K562 (cell line): ENCODE measurements at regions of chr6 and their contacts with region 1.

Region 1: DNA sequence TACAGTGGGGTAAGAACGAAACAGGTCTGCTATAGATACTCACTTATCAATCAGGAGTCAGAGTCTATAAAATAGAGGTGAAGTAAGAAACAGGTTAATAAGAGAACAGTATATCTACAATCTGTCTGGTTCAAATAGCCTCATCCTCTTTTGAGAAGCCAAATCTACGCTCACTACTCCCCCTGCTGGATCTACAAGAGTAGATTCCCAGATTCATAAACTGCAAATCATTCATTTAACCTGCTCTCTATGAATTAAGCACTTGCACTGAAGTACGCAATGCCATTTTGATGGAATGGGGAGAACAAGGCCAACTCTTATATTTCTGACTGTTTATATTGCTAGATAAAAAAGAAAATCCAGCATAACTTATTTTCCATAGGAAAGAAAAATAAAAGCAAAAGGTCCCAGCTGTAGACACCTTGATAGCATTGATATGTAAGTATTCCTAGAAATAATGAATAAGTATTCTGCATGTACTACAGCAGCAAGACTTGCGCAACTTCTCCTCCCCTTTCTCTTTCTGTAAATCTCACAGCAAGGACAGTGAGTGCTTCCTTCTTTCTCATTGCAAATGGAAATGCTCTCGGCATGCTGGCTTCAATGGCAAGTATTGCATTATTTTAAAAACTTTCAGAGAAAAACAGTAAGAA is 92.3 kb downstream of the RFX6 start:
- DNase-seq: peak; percentile 19 to 64 (median 42)
- ATAC-seq: peak; percentile 89
- H3K4me3 ChIP-seq: no peak overlapping the region
- H3K27ac ChIP-seq: no peak overlapping the region
- H3K4me1 ChIP-seq: no peaks in the 10 kb centered on the region
- H3K27me3 ChIP-seq: no peaks in the 10 kb centered on the region
- CTCF ChIP-seq: peak; percentile 58 to 69 (median 63)
- EP300 ChIP-seq: no peak
- POLR2A ChIP-seq: no peak
- RAD21 ChIP-seq: peak; percentile 28 to 75

Region 2: DNA sequence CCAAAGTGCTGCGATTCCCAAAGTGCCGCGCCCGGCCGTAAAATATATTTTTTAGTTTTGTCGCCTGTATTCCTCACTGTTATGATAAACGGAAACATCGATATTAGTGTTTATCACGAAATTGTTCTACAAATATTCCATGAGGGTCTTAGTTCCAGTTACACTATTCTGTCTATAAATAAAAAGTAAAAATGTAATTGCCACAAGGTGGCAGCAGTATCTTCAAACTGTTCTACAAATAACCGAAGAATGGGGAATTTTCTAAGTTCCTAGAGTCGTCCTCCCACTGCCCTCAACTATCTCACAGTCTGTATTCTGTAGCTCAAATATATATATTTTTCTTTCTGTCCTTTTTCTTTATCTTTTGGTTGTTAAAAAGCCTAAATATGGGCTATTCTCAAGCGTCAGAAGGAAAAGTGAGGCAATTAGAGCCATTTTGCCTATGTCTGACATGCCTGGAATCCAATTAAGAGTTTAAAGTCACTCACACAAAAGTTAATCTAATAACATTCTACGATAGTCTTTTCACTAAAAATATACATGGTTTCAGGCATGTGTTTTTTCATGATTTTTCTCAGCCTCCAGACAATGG is 189.7 kb before region 1 on chr6:
- CTCF ChIA-PET with region 1: interaction called, 7 read pairs
- POLR2A ChIA-PET with region 1: no interaction called
- in situ Hi-C with region 1: no loop called
- intact Hi-C with region 1: loop called (anchors 1 kb)
- DNase-seq: peak; percentile 10 to 70 (median 19)
- ATAC-seq: peak; percentile 93
- H3K4me3 ChIP-seq: no peak overlapping the region
- H3K27ac ChIP-seq: no peak overlapping the region
- H3K4me1 ChIP-seq: no peaks in the 10 kb centered on the region
- H3K27me3 ChIP-seq: no peaks in the 10 kb centered on the region
- CTCF ChIP-seq: peak; percentile 40 to 60 (median 46); a peak in 4 of 6 replicates
- EP300 ChIP-seq: no peak
- POLR2A ChIP-seq: no peak
- RAD21 ChIP-seq: peak; percentile 51 to 65; a peak in 3 of 4 replicates

Region 3: DNA sequence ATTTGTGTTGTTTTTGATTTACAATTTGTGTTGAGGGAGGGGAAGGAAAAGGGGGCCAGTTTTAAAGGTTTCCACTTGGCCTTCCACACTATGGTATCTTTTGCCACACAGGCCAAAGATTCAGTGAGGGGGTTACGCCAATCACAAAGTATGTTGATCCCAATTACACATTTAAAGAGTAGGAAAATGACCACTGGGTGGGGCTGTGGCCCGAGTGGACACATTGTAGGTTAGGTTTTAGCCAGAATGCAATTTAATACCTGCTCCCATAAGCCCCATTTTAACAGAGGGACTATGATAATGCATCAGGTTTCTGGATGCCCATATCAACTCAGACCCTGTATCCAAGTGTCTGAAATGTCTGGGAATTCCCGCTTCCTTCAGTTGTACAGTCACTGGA is 311.6 kb after region 1 on chr6:
- CTCF ChIA-PET with region 1: no interaction called
- POLR2A ChIA-PET with region 1: no interaction called
- in situ Hi-C with region 1: no loop called
- intact Hi-C with region 1: loop called (anchors 10 kb)
- DNase-seq: peak; percentile 29 to 35 (median 32)
- ATAC-seq: peak; percentile 89
- H3K4me3 ChIP-seq: no peak overlapping the region
- H3K27ac ChIP-seq: no peak overlapping the region
- H3K4me1 ChIP-seq: no peaks in the 10 kb centered on the region
- H3K27me3 ChIP-seq: no peaks in the 10 kb centered on the region
- CTCF ChIP-seq: peak; percentile 43 to 49 (median 44); a peak in 4 of 6 replicates
- EP300 ChIP-seq: no peak
- POLR2A ChIP-seq: no peak
- RAD21 ChIP-seq: peak in 1 of 2 experiments; percentile 43; a peak in 1 of 4 replicates

Region 4: GRCh38 chr6:117449549-117450439 is 480.5 kb after region 1 on chr6:
- CTCF ChIA-PET with region 1: no interaction called
- POLR2A ChIA-PET with region 1: no interaction called
- in situ Hi-C with region 1: no loop called
- intact Hi-C with region 1: loop called (anchors 10 kb)
- DNase-seq: peak; percentile 15 to 70 (median 20)
- ATAC-seq: peak; percentile 75
- H3K4me3 ChIP-seq: no peak overlapping the region
- H3K27ac ChIP-seq: no peak overlapping the region
- H3K4me1 ChIP-seq: no peaks in the 10 kb centered on the region
- H3K27me3 ChIP-seq: peaks cover 5 to 15% of the 10 kb centered on the region in 2 experiments; a peak in 3 of 5 replicates
- CTCF ChIP-seq: peak; percentile 46 to 76 (median 64); a peak in 5 of 6 replicates
- EP300 ChIP-seq: no peak
- POLR2A ChIP-seq: no peak
- RAD21 ChIP-seq: peak; percentile 67 to 77

Region 5: DNA sequence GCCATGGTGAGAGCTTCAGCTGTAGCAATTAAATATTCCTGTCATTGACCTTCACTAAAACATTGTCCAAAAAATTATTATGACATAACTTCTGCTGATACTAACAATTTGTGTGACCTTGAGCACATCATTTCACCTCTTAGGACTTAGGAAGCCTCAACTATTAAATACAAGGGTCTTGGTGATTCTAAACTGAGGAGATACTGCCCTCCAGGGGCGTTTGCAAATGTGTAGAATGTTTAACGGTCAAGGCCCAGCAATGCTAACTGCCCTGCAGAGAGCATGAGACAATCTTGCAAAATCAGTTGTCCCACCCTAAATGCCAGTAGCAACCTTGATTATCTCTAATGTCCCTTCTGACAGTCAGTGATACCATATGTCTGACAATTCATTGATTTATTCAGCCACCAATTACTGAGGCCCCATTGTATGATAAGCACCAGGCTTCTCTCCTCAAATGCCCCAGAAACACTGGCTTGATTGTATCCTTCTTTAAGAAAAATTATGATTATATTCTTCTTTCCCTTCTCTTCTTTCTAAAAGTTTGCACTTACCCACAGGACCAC is 1294.7 kb after region 1 on chr6:
- CTCF ChIA-PET with region 1: no interaction called
- POLR2A ChIA-PET with region 1: no interaction called
- in situ Hi-C with region 1: no loop called
- intact Hi-C with region 1: loop called (anchors 5 kb)
- DNase-seq: peak in 1 of 4 experiments; percentile 18
- ATAC-seq: peak; percentile 65
- H3K4me3 ChIP-seq: no peak overlapping the region
- H3K27ac ChIP-seq: no peak overlapping the region
- H3K4me1 ChIP-seq: no peaks in the 10 kb centered on the region
- H3K27me3 ChIP-seq: no peaks in the 10 kb centered on the region; a peak in 1 of 5 replicates
- CTCF ChIP-seq: peak in 2 of 3 experiments; percentile 24 to 38; a peak in 2 of 6 replicates
- EP300 ChIP-seq: no peak
- POLR2A ChIP-seq: no peak
- RAD21 ChIP-seq: peak in 1 of 2 experiments; percentile 51; a peak in 3 of 4 replicates